ENCODE measurements at regions of chr15 and their contacts with region 1.

Region 1: GRCh38 chr15:98800437-98801233 is 152.3 kb downstream of the IGF1R start:
- DNase-seq: peak; percentile 38 to 95 (median 66)

Region 2: GRCh38 chr15:98779463-98780071 is 21.1 kb before region 1 on chr15:
- intact Hi-C with region 1: loop called (anchors 2 kb)
- DNase-seq: peak; percentile 53 to 95 (median 82)

Region 3: GRCh38 chr15:98815207-98815606 is 14.6 kb after region 1 on chr15:
- intact Hi-C with region 1: loop called (anchors 2 kb)
- DNase-seq: peak in 8 of 10 donors; percentile 32 to 94 (median 60)